Activated CD8-positive, alpha-beta memory T cell treated with anti-CD3 and anti-CD28 coated beads, Interleukin-2, amount 10 ng/mL, durations not matched to agents 7 days and 5 days (primary cell): ENCODE measurements at regions of chr19 and their contacts with region 1.

Region 1: DNA sequence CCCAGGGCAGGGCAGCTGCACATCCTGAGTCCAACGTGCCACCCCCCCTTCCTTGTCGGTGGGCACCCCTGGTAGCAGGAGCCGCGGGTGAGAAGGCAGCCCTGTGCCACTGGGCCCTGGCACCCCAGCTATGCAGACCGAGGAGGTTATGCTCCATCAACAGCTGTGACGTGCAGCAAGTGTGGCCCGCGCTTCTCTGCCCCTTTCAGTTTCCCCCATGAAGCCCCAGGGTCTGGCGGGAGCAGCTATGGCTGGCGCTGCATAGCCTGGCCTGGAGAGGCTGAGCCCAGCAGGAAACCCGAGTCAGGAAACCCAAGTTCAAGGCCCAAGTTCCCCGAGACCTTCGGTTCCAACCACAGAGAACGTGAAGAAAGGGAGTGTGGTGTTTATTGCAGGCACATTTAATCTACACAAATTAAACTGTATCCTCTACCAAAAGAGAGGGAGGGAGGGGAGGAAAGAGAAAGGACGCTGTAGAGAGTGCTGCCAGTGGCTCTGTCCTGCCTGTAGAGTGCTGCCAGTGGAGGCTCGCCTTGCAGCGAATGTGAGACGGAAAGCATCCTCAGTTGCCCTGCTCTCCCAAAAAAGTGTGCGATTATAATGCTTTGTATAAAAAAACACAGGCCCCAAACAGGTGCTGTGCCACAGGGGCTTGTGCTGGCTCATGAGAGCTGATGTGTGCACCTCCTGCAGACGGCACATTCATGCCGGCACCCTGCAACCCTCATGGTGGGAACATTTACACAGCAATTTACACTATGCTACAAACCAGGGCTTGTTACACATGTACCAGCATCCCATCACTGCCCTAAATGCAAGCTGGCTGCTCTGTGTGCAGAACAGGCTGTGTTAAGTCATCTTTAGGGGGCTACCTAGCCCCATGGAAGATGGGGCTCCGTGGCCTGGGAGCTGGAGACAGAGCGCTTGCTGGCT is 16.3 kb downstream of the POP4 start:
- DNase-seq: peak; percentile 73
- ATAC-seq: peak; percentile 48
- H3K4me3 Mint-ChIP-seq: peak overlapping the region; percentile 87
- H3K27ac Mint-ChIP-seq: peak overlapping the region; percentile 97
- H3K4me1 Mint-ChIP-seq: peaks cover 70% of the 10 kb centered on the region
- H3K27me3 Mint-ChIP-seq: no peaks in the 10 kb centered on the region

Region 2: DNA sequence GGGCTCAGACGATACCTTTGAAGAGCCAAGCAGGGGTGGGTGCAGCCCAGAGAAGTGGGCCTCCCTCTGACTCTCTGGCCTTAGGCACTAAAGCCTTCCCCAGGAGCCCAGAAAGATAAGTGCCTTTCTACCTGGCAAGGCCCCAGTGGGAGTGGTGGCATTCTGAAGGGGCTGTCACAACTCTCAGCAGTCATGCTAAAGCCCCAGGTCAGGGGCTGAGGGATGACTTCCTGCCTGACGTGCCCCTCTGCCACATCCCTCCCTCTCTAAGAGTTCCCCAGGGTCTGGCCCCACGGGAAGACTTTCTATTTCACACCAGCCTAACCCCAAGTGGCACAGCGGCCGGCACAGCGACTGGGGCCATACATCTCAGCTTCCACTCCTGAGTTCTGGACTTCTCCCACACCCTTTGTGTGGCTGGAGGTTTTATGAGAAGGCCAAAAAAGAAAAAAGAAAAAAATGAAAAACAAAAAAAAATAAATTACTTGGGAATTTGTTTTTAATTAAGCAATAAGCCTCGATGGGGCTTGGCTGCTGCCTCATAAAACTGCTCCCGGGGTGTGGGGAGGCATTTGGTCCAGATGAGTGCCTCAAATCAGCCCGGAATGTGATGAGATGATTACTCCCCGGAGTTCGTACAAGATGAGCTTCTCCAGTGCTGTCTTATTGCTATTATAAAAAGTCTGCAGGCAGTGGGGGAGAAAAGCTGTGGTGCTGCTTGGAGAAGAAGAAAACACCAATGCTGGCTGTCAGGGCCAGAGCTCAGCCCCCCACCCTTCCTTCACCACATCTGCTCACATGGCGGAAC is 14.4 kb after region 1 on chr19:
- CTCF ChIA-PET with region 1: interaction called, 10 read pairs
- DNase-seq: no peak
- ATAC-seq: no peak
- H3K4me3 Mint-ChIP-seq: no peak overlapping the region
- H3K27ac Mint-ChIP-seq: no peak overlapping the region
- H3K4me1 Mint-ChIP-seq: no peaks in the 10 kb centered on the region
- H3K27me3 Mint-ChIP-seq: peaks cover 11% of the 10 kb centered on the region

Region 3: GRCh38 chr19:29665215-29665825 is 42.9 kb after region 1 on chr19 and contains the start of gene PLEKHF1:
- CTCF ChIA-PET with region 1: interaction called, 196 read pairs
- DNase-seq: peak; percentile 91
- ATAC-seq: peak; percentile 86
- H3K4me3 Mint-ChIP-seq: peak within 1 kb of the TSS; percentile 85
- H3K27ac Mint-ChIP-seq: peak within 1 kb of the TSS; percentile 90
- H3K4me1 Mint-ChIP-seq: peaks cover 63% of the 10 kb centered on the region
- H3K27me3 Mint-ChIP-seq: no peaks in the 10 kb centered on the region
- total RNA-seq, gene PLEKHF1: 42.4 to 64.1 TPM

Region 4: DNA sequence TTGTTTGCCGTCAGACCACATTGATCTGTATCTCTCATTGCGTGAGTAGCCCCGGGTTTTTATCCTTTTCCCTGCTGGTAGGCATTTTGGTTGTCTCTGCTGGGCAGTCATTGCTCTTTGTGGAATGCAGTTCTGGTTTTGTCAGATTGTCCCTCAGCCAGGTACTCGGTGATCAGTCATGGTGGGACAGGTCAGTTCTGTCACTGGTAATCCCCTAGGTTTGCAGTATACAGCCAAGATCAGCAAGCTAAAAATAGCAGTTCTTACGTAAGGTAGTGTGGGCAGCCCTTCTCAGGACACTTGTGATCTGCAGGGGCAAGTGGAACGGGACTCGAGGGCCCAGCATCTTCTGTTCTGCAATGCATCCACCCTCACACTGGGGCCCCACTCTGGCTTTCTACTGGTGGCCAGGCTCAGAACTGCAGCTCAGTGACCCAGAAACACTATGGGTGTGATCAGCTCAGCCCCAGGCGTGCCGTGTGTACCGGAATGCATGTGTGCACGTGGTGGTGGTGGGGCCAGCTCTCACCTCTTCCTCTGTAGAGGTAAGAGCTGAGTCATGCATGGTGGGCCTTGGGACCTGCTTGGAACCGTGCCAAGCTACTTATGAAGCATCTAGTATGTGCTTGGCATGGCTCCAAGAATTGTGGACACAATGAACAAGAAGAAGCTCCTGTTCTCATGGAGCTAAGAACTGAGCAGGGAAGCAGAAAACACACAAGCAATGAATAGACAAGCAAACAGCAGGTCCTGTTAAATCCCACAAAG is 49.2 kb after region 1 on chr19:
- CTCF ChIA-PET with region 1: interaction called, 196 read pairs
- DNase-seq: peak; percentile 98
- ATAC-seq: peak; percentile 77
- H3K4me3 Mint-ChIP-seq: peak overlapping the region; percentile 64
- H3K27ac Mint-ChIP-seq: peak overlapping the region; percentile 90
- H3K4me1 Mint-ChIP-seq: peaks cover 91% of the 10 kb centered on the region
- H3K27me3 Mint-ChIP-seq: no peaks in the 10 kb centered on the region

Region 5: DNA sequence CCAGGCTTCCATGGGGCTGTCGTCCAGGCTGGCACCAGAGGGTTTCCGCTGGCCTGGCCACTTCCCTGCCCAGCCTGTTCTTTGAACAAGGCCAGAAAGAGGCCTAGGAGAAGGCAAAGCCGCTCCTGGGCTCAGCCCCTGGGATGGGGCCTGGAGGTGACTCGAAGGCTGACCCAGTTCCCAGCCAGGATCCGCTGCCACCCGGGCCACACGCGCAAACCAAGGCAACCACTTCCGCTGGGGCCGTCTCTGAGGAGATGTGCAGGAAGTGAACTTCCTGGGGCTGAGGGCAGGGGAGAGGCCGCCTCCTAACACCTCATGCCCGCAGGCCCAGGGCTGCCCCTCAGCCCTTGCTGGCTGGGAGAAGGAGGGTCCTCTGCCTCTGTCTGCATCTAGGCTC is 58.0 kb after region 1 on chr19:
- CTCF ChIA-PET with region 1: interaction called, 10 read pairs
- DNase-seq: peak; percentile 95
- ATAC-seq: peak; percentile 89
- H3K4me3 Mint-ChIP-seq: peak overlapping the region; percentile 43
- H3K27ac Mint-ChIP-seq: peak overlapping the region; percentile 85
- H3K4me1 Mint-ChIP-seq: peaks cover 73% of the 10 kb centered on the region
- H3K27me3 Mint-ChIP-seq: no peaks in the 10 kb centered on the region